ENCODE measurements at regions of chr1 and their contacts with region 1.

Region 1: GRCh38 chr1:228212966-228213844 is 5.4 kb downstream of the OBSCN start:
- DNase-seq: peak; percentile 86 to 93 (median 92)
- ATAC-seq: peak; percentile 89
- H3K4me3 ChIP-seq: peak overlapping the region; percentile 61 to 76
- H3K4me3 Mint-ChIP-seq: peak overlapping the region; percentile 90
- H3K27ac ChIP-seq: peak overlapping the region; percentile 36 to 55
- H3K27ac Mint-ChIP-seq: peak overlapping the region; percentile 93
- H3K4me1 ChIP-seq: peaks cover 13% of the 10 kb centered on the region
- H3K4me1 Mint-ChIP-seq: peaks cover 11% of the 10 kb centered on the region
- H3K27me3 ChIP-seq: peaks cover 0 to 2% of the 10 kb centered on the region in 2 experiments
- H3K27me3 Mint-ChIP-seq: no peaks in the 10 kb centered on the region
- CTCF ChIP-seq: peak; percentile 24

Region 2: DNA sequence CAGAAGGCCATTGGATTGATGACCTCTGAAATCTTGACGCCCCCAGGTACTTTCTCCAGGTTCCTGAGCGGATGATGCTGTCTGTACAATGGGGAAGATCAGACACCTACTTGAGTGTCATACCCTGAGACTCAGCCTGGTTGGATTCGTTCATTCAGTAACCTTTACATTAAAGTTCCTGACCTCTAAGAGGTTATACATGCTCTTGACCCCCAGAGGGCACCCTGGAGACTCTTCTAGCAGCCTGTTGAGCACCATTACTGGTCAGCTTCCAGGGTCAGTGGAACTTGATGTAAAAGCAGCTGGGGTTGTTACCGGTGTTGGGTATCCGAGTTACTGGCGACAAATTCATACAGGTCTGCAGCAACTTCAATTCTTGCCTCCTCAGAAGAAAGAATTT is 764.2 kb before region 1 on chr1:
- CTCF ChIA-PET with region 1: no interaction called
- POLR2A ChIA-PET with region 1: no interaction called
- intact Hi-C with region 1: no loop called
- DNase-seq: peak in 5 of 9 experiments; percentile 6 to 32 (median 18)
- ATAC-seq: no peak
- H3K4me3 ChIP-seq: no peak overlapping the region
- H3K4me3 Mint-ChIP-seq: no peak overlapping the region
- H3K27ac ChIP-seq: no peak overlapping the region
- H3K27ac Mint-ChIP-seq: no peak overlapping the region
- H3K4me1 ChIP-seq: no peaks in the 10 kb centered on the region
- H3K4me1 Mint-ChIP-seq: no peaks in the 10 kb centered on the region
- H3K27me3 ChIP-seq: peaks cover 0 to 8% of the 10 kb centered on the region in 2 experiments
- H3K27me3 Mint-ChIP-seq: peaks cover 33% of the 10 kb centered on the region
- CTCF ChIP-seq: no peak

Region 3: GRCh38 chr1:227787513-227788270 is 425.5 kb before region 1 on chr1:
- CTCF ChIA-PET with region 1: no interaction called
- POLR2A ChIA-PET with region 1: no interaction called
- intact Hi-C with region 1: loop called in 1 of 2 experiments (anchors 1 kb)
- DNase-seq: peak; percentile 92 to 98 (median 95)
- ATAC-seq: peak; percentile 93
- H3K4me3 ChIP-seq: peak overlapping the region; percentile 75 to 97
- H3K4me3 Mint-ChIP-seq: peak overlapping the region; percentile 83
- H3K27ac ChIP-seq: peak overlapping the region in 1 of 2 experiments; percentile 52
- H3K27ac Mint-ChIP-seq: peak overlapping the region; percentile 71
- H3K4me1 ChIP-seq: peaks cover 21% of the 10 kb centered on the region
- H3K4me1 Mint-ChIP-seq: peaks cover 21% of the 10 kb centered on the region
- H3K27me3 ChIP-seq: peaks cover 0 to 5% of the 10 kb centered on the region in 2 experiments
- H3K27me3 Mint-ChIP-seq: no peaks in the 10 kb centered on the region
- CTCF ChIP-seq: no peak

Region 4: GRCh38 chr1:228109073-228109961 is 103.9 kb before region 1 on chr1 and contains the start of gene MRPL55:
- CTCF ChIA-PET with region 1: no interaction called
- POLR2A ChIA-PET with region 1: no interaction called
- intact Hi-C with region 1: loop called in 1 of 2 experiments (anchors 1 kb)
- DNase-seq: peak; percentile 97 to 100 (median 98)
- ATAC-seq: peak; percentile 97
- H3K4me3 ChIP-seq: peak within 1 kb of the TSS; percentile 93 to 98
- H3K4me3 Mint-ChIP-seq: peak within 1 kb of the TSS; percentile 95
- H3K27ac ChIP-seq: peak within 1 kb of the TSS; percentile 90 to 94
- H3K27ac Mint-ChIP-seq: peak within 1 kb of the TSS; percentile 96
- H3K4me1 ChIP-seq: peaks cover 21% of the 10 kb centered on the region
- H3K4me1 Mint-ChIP-seq: peaks cover 26% of the 10 kb centered on the region
- H3K27me3 ChIP-seq: no peaks in the 10 kb centered on the region
- H3K27me3 Mint-ChIP-seq: no peaks in the 10 kb centered on the region
- CTCF ChIP-seq: no peak
- total RNA-seq, gene MRPL55: 90.2 to 90.7 TPM

Region 5: DNA sequence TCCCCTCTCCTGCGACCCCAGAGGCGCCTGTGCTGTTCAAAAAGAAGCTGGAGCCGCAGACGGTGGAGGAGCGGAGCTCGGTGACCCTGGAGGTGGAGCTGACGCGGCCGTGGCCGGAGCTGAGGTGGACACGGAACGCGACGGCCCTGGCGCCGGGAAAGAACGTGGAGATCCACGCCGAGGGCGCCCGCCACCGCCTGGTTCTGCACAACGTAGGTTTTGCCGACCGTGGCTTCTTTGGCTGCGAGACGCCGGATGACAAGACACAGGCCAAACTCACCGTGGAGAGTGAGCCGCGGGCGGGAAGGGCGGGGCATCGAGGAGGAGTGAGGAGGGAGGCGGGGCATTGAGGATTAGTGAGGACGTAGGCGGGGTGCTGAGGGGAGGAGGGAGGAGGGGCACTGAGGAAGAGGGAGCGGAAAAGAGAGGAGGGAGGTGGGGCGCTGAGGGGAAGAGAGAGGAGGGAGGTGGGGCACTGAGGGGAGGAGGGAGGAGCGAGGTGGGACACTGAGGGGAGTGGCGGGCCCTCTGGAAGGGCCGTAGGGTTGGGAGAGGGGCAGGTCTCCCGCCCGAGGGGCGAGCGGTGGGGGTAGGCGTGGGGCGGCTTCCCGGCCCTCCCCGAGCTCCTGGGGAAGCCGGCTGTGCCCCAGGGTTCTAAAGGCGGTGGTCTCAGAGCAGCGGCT is 62.7 kb after region 1 on chr1:
- CTCF ChIA-PET with region 1: interaction called, 4 read pairs
- POLR2A ChIA-PET with region 1: no interaction called
- intact Hi-C with region 1: loop called in 1 of 2 experiments (anchors 5 kb)
- DNase-seq: peak; percentile 74 to 95 (median 92)
- ATAC-seq: peak; percentile 96
- H3K4me3 ChIP-seq: peak overlapping the region; percentile 75 to 81
- H3K4me3 Mint-ChIP-seq: peak overlapping the region; percentile 80
- H3K27ac ChIP-seq: peak overlapping the region; percentile 31 to 39
- H3K27ac Mint-ChIP-seq: peak overlapping the region; percentile 18
- H3K4me1 ChIP-seq: peaks cover 6% of the 10 kb centered on the region
- H3K4me1 Mint-ChIP-seq: peaks cover 12% of the 10 kb centered on the region
- H3K27me3 ChIP-seq: no peaks in the 10 kb centered on the region
- H3K27me3 Mint-ChIP-seq: no peaks in the 10 kb centered on the region
- CTCF ChIP-seq: no peak

Region 6: DNA sequence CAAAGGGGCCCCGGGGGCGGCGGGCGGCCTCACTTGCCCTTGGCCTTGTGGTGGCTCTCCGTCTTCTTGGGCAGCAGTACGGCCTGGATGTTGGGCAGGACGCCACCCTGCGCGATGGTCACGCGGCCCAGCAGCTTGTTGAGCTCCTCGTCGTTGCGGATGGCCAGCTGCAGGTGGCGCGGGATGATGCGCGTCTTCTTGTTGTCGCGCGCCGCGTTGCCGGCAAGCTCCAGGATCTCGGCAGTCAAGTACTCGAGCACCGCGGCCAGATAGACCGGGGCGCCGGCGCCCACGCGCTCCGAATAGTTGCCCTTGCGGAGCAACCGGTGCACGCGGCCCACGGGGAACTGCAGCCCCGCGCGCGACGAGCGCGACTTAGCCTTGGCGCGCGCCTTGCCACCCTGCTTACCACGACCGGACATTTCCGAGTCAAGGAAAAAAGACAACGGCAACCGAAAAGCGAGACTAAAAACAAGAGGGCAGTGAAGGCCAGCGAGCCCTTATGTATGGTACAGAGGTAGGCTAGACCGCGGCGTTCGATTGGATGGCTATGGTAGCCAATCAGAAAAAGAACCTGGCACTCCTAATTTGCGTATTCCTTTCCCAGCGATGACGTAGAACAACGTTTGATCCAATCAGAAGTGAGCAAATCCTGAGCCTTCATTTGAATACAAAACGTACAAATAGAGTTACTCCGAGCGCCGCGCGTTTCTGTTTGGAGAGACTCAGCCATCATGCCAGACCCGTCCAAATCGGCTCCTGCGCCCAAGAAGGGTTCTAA is 244.4 kb after region 1 on chr1:
- CTCF ChIA-PET with region 1: interaction called, 5 read pairs
- POLR2A ChIA-PET with region 1: interaction called, 5 read pairs
- intact Hi-C with region 1: loop called in 1 of 2 experiments (anchors 1 kb)
- DNase-seq: peak; percentile 68 to 98 (median 80)
- ATAC-seq: peak; percentile 85
- H3K4me3 ChIP-seq: peak overlapping the region; percentile 69 to 91
- H3K4me3 Mint-ChIP-seq: peak overlapping the region; percentile 93
- H3K27ac ChIP-seq: peak overlapping the region; percentile 91 to 93
- H3K27ac Mint-ChIP-seq: peak overlapping the region; percentile 99
- H3K4me1 ChIP-seq: peaks cover 23% of the 10 kb centered on the region
- H3K4me1 Mint-ChIP-seq: peaks cover 39% of the 10 kb centered on the region
- H3K27me3 ChIP-seq: no peaks in the 10 kb centered on the region
- H3K27me3 Mint-ChIP-seq: peaks cover 4% of the 10 kb centered on the region
- CTCF ChIP-seq: peak; percentile 31

Region 7: DNA sequence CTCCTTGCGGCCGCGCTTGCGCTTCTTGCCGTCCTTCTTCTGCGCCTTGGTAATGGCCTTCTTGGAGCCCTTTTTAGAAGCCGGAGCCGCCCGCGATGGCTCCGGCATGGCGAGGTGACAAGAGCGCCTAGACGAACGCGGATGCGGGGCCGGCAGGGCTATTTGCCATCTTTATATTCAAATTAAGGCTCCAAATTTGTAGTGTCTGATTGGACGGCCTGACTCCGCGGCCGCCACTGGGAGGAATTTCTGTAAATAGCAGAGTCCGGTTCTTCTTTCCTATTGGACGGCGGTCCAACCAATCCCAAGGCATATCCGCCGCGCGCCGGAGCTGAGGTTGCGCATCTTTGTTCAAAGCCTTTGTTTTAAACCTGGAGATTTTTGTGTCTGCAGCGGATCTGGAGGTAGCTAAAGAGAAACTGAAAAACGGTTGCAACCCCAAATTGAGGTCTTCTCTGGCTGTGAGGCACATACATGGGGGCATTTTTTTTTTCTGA is 251.3 kb after region 1 on chr1:
- CTCF ChIA-PET with region 1: no interaction called
- POLR2A ChIA-PET with region 1: no interaction called
- intact Hi-C with region 1: loop called (anchors 1 to 2 kb)
- DNase-seq: peak; percentile 75 to 95 (median 86)
- ATAC-seq: peak; percentile 96
- H3K4me3 ChIP-seq: peak overlapping the region; percentile 45 to 51
- H3K4me3 Mint-ChIP-seq: peak overlapping the region; percentile 85
- H3K27ac ChIP-seq: peak overlapping the region; percentile 18 to 41
- H3K27ac Mint-ChIP-seq: peak overlapping the region; percentile 69
- H3K4me1 ChIP-seq: peaks cover 28% of the 10 kb centered on the region
- H3K4me1 Mint-ChIP-seq: peaks cover 40% of the 10 kb centered on the region
- H3K27me3 ChIP-seq: no peaks in the 10 kb centered on the region
- H3K27me3 Mint-ChIP-seq: peaks cover 14% of the 10 kb centered on the region
- CTCF ChIP-seq: no peak

Region 8: GRCh38 chr1:228515200-228515834 is 302.1 kb after region 1 on chr1:
- CTCF ChIA-PET with region 1: interaction called, 11 read pairs
- POLR2A ChIA-PET with region 1: no interaction called
- intact Hi-C with region 1: loop called (anchors 1 kb)
- DNase-seq: peak in 7 of 9 experiments; percentile 7 to 76 (median 33)
- ATAC-seq: peak; percentile 52
- H3K4me3 ChIP-seq: no peak overlapping the region
- H3K4me3 Mint-ChIP-seq: no peak overlapping the region
- H3K27ac ChIP-seq: no peak overlapping the region
- H3K27ac Mint-ChIP-seq: no peak overlapping the region
- H3K4me1 ChIP-seq: peaks cover 11% of the 10 kb centered on the region
- H3K4me1 Mint-ChIP-seq: peaks cover 15% of the 10 kb centered on the region
- H3K27me3 ChIP-seq: no peaks in the 10 kb centered on the region
- H3K27me3 Mint-ChIP-seq: peaks cover 10% of the 10 kb centered on the region
- CTCF ChIP-seq: peak; percentile 93